Activated CD8-positive, alpha-beta memory T cell treated with anti-CD3 and anti-CD28 coated beads, Interleukin-2, amount 10 ng/mL, durations not matched to agents 7 days and 5 days (primary cell): ENCODE measurements at regions of chr6 and their contacts with region 1.

Region 1: DNA sequence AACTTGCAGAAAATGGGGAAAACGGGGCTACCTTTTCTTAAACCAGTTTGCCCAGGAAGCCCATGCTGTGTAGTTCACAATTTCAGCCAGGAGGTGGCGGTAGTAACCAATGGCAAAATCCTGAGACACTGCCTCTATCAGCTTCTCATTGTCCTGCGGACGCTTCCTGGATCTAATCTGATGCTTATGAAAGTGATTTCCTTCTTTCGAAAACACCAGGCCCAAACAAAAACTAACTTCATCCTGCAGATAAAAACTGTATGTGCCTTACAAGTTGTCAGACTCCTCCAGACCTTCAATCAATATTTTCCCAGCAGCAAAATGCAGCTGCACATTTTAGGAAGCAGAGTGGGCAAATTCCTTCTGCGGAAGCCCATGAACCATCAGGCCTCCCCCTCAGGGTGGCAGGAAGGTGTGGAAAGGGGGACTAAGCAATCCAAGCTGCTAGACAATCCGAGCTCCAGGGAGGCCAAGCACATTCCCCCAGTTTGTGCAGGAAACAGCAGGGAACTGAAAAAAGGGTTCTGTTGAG is 88.5 kb downstream of the LY86 start:
- DNase-seq: peak; percentile 90
- ATAC-seq: peak; percentile 91
- H3K4me3 Mint-ChIP-seq: peak overlapping the region; percentile 1
- H3K27ac Mint-ChIP-seq: peak overlapping the region; percentile 72
- H3K4me1 Mint-ChIP-seq: peaks cover 18% of the 10 kb centered on the region
- H3K27me3 Mint-ChIP-seq: no peaks in the 10 kb centered on the region

Region 2: DNA sequence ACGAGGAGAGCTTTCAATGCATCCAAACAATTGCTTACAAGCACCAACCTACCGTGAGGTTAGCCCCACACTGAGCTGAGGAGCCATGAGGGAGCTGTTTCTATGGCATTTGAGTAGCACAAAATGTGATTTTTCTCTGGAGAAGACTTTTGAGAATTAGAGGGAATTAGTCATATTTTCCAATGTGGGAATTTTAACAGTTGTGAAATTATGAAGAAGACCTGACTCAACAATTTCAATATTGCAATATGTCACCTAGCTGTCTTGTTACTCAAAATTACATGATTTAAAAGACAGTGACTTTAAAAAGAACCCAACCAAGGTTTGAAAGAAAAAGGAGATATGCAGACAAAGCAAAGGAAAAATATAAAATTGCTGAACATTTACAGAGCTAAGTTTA is 151.0 kb before region 1 on chr6:
- CTCF ChIA-PET with region 1: no interaction called
- DNase-seq: no peak
- ATAC-seq: no peak
- H3K4me3 Mint-ChIP-seq: no peak overlapping the region
- H3K27ac Mint-ChIP-seq: no peak overlapping the region
- H3K4me1 Mint-ChIP-seq: no peaks in the 10 kb centered on the region
- H3K27me3 Mint-ChIP-seq: peaks cover 85% of the 10 kb centered on the region

Region 3: DNA sequence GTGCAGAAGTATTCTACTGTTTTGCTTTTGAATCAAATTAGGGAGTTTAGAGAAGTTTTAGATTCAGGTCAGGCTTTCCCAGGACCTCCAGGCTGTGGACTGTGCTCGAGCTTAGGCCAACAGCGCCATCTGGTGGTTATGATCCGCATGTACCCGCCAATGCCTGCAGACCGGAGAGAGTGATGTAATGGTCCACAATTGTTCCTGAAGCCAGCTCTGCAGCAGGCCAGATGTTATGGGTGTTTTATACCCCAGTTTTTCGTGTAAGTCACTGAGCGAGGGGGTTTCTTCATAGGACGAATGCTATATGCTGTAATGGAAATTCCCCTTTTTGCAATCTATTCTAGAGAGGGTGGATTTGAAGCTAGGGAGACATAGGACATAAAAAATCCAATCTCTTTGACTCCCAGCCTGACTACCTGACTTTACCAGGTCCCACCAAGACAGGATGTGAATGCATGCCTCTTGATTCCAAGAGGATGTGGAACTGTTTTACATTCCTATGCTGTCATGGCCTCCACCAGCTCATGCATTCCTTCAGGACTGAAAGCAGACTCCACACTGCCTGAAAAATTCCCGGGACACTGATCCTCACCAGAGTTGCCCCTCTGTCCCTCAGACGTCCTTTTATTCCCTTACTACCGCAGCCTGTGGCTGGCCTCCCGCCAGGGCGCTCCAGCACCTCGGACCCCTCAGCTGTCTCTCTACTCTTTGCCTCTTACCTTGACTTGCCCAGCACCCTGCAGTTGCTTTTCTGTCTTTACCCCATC is 129.7 kb before region 1 on chr6:
- CTCF ChIA-PET with region 1: interaction called, 10 read pairs
- DNase-seq: peak; percentile 88
- ATAC-seq: peak; percentile 97
- H3K4me3 Mint-ChIP-seq: peak overlapping the region; percentile 34
- H3K27ac Mint-ChIP-seq: no peak overlapping the region
- H3K4me1 Mint-ChIP-seq: peaks cover 12% of the 10 kb centered on the region
- H3K27me3 Mint-ChIP-seq: peaks cover 79% of the 10 kb centered on the region

Region 4: GRCh38 chr6:6556738-6557505 is 120.1 kb before region 1 on chr6:
- CTCF ChIA-PET with region 1: interaction called, 17 read pairs
- DNase-seq: peak; percentile 64
- ATAC-seq: peak; percentile 73
- H3K4me3 Mint-ChIP-seq: no peak overlapping the region
- H3K27ac Mint-ChIP-seq: no peak overlapping the region
- H3K4me1 Mint-ChIP-seq: peaks cover 39% of the 10 kb centered on the region
- H3K27me3 Mint-ChIP-seq: peaks cover 21% of the 10 kb centered on the region

Region 5: DNA sequence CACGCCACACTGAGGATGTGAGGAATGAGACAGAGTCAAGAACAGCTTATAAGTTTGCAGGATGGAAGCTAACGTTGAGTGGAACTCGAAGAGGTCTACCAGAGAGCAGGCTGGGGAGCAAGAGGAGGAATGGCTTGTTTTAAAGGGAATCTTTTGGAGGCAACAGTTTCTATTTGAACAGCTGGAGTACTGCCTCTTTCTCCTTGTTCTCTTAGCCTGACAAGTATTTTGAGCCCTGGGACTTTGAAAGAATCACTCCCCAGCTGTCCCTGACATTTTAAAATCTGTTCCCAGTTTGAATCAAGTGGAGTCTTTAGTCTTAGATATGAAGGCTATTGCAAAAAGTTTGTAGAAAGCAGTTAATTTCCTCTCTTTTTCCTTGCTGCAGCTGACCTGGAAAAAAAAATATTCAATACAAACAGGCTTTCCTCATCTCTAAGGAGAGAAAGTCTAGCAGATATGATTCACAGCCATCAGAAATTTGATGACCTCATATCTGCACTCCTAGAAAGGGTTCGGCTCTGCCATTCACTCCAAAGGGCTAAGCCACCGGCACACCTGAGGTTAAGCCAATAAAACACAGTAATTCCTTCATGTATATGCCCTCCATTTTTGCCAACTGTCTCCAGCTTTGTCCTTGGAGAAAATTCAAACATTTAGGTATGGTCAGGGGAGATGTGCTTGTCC is 107.4 kb before region 1 on chr6:
- CTCF ChIA-PET with region 1: no interaction called
- DNase-seq: no peak
- ATAC-seq: no peak
- H3K4me3 Mint-ChIP-seq: no peak overlapping the region
- H3K27ac Mint-ChIP-seq: no peak overlapping the region
- H3K4me1 Mint-ChIP-seq: peaks cover under 1% of the 10 kb centered on the region
- H3K27me3 Mint-ChIP-seq: peaks cover 20% of the 10 kb centered on the region

Region 6: DNA sequence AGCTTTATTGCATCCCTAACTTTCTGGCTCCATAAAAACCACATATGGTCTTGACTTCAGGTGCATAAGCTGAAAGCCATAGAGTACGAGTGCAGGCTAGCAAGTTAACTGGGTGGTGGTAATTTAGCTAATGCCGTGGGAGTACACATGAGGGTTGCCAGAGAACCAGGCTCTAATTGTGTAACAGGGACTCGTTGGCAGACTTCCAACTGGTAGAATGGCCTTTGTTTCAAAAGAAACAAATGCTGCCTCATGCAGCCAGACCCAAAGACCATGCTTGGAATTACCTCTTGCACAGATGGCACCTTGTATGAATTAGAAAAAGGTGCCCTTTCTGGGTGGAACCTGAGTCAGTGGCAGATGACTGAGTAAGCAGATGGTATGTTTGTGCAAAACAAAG is 15.3 kb before region 1 on chr6:
- CTCF ChIA-PET with region 1: interaction called, 33 read pairs
- DNase-seq: no peak
- ATAC-seq: no peak
- H3K4me3 Mint-ChIP-seq: no peak overlapping the region
- H3K27ac Mint-ChIP-seq: peak overlapping the region; percentile 33
- H3K4me1 Mint-ChIP-seq: peaks cover 56% of the 10 kb centered on the region
- H3K27me3 Mint-ChIP-seq: no peaks in the 10 kb centered on the region

Region 7: GRCh38 chr6:7243179-7243981 is 566.4 kb after region 1 on chr6:
- CTCF ChIA-PET with region 1: interaction called, 10 read pairs
- DNase-seq: peak; percentile 60
- ATAC-seq: peak; percentile 74
- H3K4me3 Mint-ChIP-seq: no peak overlapping the region
- H3K27ac Mint-ChIP-seq: peak overlapping the region; percentile 64
- H3K4me1 Mint-ChIP-seq: peaks cover 6% of the 10 kb centered on the region
- H3K27me3 Mint-ChIP-seq: no peaks in the 10 kb centered on the region